ENCODE measurements at regions of chr11 and their contacts with region 1.

Region 1: DNA sequence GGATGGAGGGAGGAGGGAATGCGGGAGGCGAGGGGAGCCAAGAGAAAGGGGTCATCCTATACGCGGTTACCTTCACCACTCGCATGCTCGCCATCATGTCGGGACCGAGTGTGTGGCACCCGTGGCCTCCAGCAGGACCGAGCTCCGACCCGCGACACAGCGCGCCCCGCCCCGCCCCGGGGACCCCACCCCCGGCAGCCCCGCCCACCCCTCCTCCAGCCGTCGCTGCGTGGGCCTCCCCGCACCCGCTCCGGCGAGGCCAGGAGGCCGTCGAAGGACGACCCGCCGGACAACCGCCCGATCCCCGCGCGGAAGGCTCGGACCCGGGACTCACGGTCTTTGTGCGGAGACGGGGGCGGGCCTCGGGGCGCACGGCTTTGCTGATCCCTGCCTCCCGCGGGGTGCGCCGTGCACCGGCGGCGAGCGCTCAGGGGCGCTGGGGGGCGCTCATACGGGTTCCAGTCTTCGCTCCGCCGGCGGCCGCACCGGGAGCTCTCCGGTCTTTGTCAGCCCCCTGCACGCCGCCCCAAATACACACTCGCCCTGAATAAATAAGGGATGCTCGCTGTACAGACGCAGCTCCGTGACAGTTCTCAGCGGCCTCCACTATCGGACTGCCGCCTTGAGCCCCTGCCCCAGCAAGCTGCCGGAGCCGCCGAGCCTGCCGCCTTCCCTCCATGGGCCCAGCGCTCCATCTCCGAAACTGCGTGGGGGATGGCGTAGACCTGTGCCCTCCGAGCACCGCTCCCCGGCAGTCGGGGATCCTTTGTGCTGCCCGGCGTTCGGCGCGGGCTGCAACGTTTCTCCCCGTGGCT is at the start of gene UBE2L6:
- DNase-seq: peak; percentile 56 to 93 (median 78)
- ATAC-seq: peak; percentile 80 to 88
- H3K4me3 Mint-ChIP-seq: peak within 1 kb of the TSS; percentile 97 to 100 (median 99)
- H3K27ac Mint-ChIP-seq: peak within 1 kb of the TSS; percentile 94 to 99 (median 98)
- H3K4me1 Mint-ChIP-seq: peaks cover 18 to 67% (median 50%) of the 10 kb centered on the region in 4 donors
- H3K27me3 Mint-ChIP-seq: no peaks in the 10 kb centered on the region
- polyA plus RNA-seq, gene UBE2L6: 218 to 246 (median 239) TPM

Region 2: GRCh38 chr11:57644748-57645688 is 77.3 kb after region 1 on chr11:
- POLR2A ChIA-PET with region 1: interaction called, 33 read pairs
- DNase-seq: peak; percentile 70 to 93 (median 85)
- ATAC-seq: peak; percentile 72 to 77
- H3K4me3 Mint-ChIP-seq: peak overlapping the region in 1 of 10 donors; percentile 25
- H3K27ac Mint-ChIP-seq: peak overlapping the region in 3 of 10 donors; percentile 21 to 41 (median 41)
- H3K4me1 Mint-ChIP-seq: peaks cover 15 to 50% (median 39%) of the 10 kb centered on the region in 4 donors
- H3K27me3 Mint-ChIP-seq: peaks cover 13 to 59% (median 38%) of the 10 kb centered on the region in 5 donors

Region 3: GRCh38 chr11:57649826-57650738 is 82.4 kb after region 1 on chr11 and contains the start of gene YPEL4:
- POLR2A ChIA-PET with region 1: interaction called, 12 read pairs
- DNase-seq: peak; percentile 48 to 90 (median 72)
- ATAC-seq: peak; percentile 80 to 88
- H3K4me3 Mint-ChIP-seq: peak within 1 kb of the TSS; percentile 78 to 96 (median 89)
- H3K27ac Mint-ChIP-seq: peak within 1 kb of the TSS; percentile 84 to 98 (median 95)
- H3K4me1 Mint-ChIP-seq: peaks cover 21 to 59% (median 57%) of the 10 kb centered on the region in 4 donors
- H3K27me3 Mint-ChIP-seq: peaks cover 12 to 42% (median 31%) of the 10 kb centered on the region in 5 donors
- polyA plus RNA-seq, gene YPEL4: 0.27 TPM in 1 of 3 donors, not detected in the others